ENCODE measurements at regions of chr10 and their contacts with region 1.

Region 1: GRCh38 chr10:71727738-71728737 is 8.5 kb upstream of the C10orf105 start:
- DNase-seq: peak; percentile 86
- ATAC-seq: peak; percentile 45
- H3K4me3 Mint-ChIP-seq: peak overlapping the region; percentile 36
- H3K27ac Mint-ChIP-seq: peak overlapping the region; percentile 96
- H3K4me1 Mint-ChIP-seq: peaks cover 96% of the 10 kb centered on the region
- H3K27me3 Mint-ChIP-seq: no peaks in the 10 kb centered on the region

Region 2: DNA sequence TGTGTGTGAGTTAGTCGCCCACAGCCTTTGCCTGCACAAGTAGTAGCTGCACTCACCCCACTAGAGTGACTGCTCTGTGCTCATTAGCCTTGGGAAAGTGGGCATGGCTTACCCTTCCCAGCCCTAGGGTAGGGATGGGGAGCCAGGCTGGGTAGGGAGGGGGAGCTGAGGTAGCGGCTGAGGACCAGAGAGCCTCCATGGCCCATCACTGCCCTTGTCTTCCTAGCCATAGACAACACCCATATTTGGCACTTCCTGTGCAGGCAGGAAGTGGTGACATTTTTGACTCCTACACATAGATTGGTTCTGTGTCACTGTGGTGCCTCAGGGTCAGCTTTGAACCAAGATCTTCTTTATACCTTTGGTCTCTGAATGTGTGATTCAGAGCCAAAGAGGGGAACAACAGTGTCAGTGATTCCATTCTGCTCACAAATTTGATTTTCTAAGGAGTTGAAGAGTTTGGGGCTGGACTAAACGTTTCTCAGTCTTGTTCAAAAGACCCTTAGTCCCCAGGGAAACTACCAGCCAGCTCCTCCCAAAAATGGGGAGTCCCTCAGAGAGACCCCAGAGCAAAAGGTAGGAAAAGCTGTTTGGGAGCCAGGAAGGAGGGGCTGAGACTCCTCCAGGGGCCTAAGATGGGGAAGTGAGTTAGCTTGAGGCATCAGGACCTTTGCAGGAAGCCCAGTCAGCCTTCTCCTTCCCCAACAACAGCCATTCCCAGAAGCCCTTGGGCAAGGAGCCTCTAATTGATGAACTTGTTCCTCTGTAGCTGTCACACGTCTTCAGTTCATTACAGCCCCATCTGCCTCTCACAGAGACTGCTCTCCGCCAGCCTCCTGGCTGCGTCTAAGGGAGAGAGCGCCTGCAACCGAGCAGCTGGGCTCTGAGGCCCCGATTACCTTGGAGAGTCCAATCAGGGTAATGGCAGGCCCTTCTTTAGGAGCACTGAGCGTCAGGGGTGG is 196.3 kb before region 1 on chr10:
- CTCF ChIA-PET with region 1: no interaction called
- POLR2A ChIA-PET with region 1: no interaction called
- intact Hi-C with region 1: loop called in 1 of 2 experiments (anchors 1 kb)
- DNase-seq: peak; percentile 73
- ATAC-seq: peak; percentile 98
- H3K4me3 Mint-ChIP-seq: no peak overlapping the region
- H3K27ac Mint-ChIP-seq: peak overlapping the region; percentile 92
- H3K4me1 Mint-ChIP-seq: peaks cover 23% of the 10 kb centered on the region
- H3K27me3 Mint-ChIP-seq: no peaks in the 10 kb centered on the region

Region 3: GRCh38 chr10:71740069-71740468 is 12.0 kb after region 1 on chr10:
- CTCF ChIA-PET with region 1: interaction called, 5 read pairs
- POLR2A ChIA-PET with region 1: interaction called, 5 read pairs
- intact Hi-C with region 1: loop called (anchors 1 kb)
- DNase-seq: no peak
- ATAC-seq: no peak
- H3K4me3 Mint-ChIP-seq: no peak overlapping the region
- H3K27ac Mint-ChIP-seq: peak overlapping the region; percentile 97
- H3K4me1 Mint-ChIP-seq: peaks cover 100% of the 10 kb centered on the region
- H3K27me3 Mint-ChIP-seq: no peaks in the 10 kb centered on the region

Region 4: DNA sequence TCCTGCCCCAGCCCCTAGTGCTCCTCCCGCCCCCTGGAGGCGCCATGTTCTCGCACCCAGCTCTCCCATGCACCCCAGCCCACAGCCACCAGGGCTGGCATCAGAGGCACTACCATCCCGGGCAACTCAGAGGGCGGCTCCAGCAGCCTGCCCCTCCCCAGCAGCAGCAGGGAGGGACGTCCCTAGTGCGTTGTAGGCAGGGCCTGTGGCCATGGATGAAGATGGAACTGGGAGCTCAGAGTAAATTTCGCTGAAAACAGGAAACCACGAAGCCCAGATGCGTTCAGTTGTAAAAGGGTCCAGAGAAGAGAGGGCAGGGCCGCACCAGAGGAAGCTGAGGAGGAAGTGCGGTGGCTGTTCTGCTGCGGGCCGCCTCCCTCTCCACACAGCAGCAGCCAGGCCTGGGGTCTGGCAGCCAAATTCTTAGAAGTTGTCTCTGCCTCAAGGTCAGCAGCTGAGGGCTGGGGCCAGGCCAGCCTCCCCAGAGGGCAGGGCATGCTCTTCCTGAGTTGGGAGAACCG is 20.7 kb after region 1 on chr10:
- CTCF ChIA-PET with region 1: interaction called, 11 read pairs
- POLR2A ChIA-PET with region 1: interaction called, 5 read pairs
- intact Hi-C with region 1: loop called (anchors 1 kb)
- DNase-seq: peak; percentile 90
- ATAC-seq: peak; percentile 91
- H3K4me3 Mint-ChIP-seq: peak overlapping the region; percentile 68
- H3K27ac Mint-ChIP-seq: peak overlapping the region; percentile 99
- H3K4me1 Mint-ChIP-seq: peaks cover 97% of the 10 kb centered on the region
- H3K27me3 Mint-ChIP-seq: no peaks in the 10 kb centered on the region

Region 5: GRCh38 chr10:71756311-71757191 is 28.5 kb after region 1 on chr10:
- CTCF ChIA-PET with region 1: interaction called, 17 read pairs
- POLR2A ChIA-PET with region 1: no interaction called
- intact Hi-C with region 1: loop called in 1 of 2 experiments (anchors 1 kb)
- DNase-seq: no peak
- ATAC-seq: peak; percentile 82
- H3K4me3 Mint-ChIP-seq: peak overlapping the region; percentile 48
- H3K27ac Mint-ChIP-seq: peak overlapping the region; percentile 90
- H3K4me1 Mint-ChIP-seq: peaks cover 90% of the 10 kb centered on the region
- H3K27me3 Mint-ChIP-seq: no peaks in the 10 kb centered on the region

Region 6: GRCh38 chr10:72088889-72089575 is 361.0 kb after region 1 on chr10:
- CTCF ChIA-PET with region 1: no interaction called
- POLR2A ChIA-PET with region 1: no interaction called
- intact Hi-C with region 1: loop called in 1 of 2 experiments (anchors 5 kb)
- DNase-seq: peak; percentile 79
- ATAC-seq: peak; percentile 50
- H3K4me3 Mint-ChIP-seq: peak overlapping the region; percentile 98
- H3K27ac Mint-ChIP-seq: peak overlapping the region; percentile 100
- H3K4me1 Mint-ChIP-seq: peaks cover 57% of the 10 kb centered on the region
- H3K27me3 Mint-ChIP-seq: no peaks in the 10 kb centered on the region

Region 7: DNA sequence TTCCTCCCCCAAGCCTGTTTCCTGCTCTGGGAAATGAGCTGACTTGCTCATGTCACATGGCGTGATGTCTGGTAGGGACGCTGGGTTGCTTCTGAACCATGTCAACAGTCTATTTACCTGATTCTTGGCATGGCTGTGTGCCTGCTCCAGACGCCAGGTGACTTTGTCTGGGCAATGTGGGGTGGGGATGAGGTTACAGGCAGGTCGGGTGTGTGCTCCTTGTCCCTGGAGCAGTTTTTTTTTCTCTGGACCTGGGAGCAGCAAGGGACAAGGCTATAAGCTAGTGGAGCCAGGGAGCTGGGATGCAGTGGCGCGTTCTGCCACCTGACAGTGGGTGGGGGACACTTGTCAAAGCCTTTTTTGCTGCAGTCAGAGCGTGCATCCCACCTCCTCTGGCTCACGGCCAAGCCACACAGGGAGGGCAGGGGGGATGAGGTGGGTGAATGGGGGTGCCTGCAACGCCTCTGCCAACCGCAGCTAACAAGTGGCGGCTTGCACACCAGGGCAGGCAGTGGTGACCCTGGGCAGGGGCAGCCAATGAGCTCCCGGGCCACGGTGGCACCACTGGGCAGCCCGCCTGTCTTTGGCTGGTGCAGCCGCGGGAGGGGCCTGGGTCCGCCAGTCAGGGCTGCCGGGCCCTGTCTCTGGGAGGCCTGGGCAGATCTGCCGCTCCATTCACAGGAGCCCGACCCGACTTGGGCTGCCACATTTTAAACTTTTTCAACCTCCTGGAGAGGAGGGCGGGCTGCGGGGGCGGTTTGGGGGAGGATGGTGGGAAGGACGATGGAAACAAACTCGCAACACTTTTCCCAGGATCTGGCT is 603.8 kb after region 1 on chr10:
- CTCF ChIA-PET with region 1: no interaction called
- POLR2A ChIA-PET with region 1: no interaction called
- intact Hi-C with region 1: no loop called
- DNase-seq: peak; percentile 97
- ATAC-seq: peak; percentile 70
- H3K4me3 Mint-ChIP-seq: peak overlapping the region; percentile 94
- H3K27ac Mint-ChIP-seq: peak overlapping the region; percentile 99
- H3K4me1 Mint-ChIP-seq: peaks cover 89% of the 10 kb centered on the region
- H3K27me3 Mint-ChIP-seq: no peaks in the 10 kb centered on the region